Activated CD4-positive, alpha-beta T cell treated with anti-CD3 and anti-CD28 coated beads, Interleukin-2, amount 10 ng/mL, durations not matched to agents 7 days and 5 days (primary cell): ENCODE measurements at regions of chr14 and their contacts with region 1.

Region 1: GRCh38 chr14:75514673-75515628 is 7.3 kb upstream of the BATF start:
- DNase-seq: peak; percentile 41
- H3K4me3 Mint-ChIP-seq: peak overlapping the region; percentile 70
- H3K27ac Mint-ChIP-seq: peak overlapping the region; percentile 91
- H3K4me1 Mint-ChIP-seq: peaks cover 27% of the 10 kb centered on the region
- H3K27me3 Mint-ChIP-seq: no peaks in the 10 kb centered on the region

Region 2: DNA sequence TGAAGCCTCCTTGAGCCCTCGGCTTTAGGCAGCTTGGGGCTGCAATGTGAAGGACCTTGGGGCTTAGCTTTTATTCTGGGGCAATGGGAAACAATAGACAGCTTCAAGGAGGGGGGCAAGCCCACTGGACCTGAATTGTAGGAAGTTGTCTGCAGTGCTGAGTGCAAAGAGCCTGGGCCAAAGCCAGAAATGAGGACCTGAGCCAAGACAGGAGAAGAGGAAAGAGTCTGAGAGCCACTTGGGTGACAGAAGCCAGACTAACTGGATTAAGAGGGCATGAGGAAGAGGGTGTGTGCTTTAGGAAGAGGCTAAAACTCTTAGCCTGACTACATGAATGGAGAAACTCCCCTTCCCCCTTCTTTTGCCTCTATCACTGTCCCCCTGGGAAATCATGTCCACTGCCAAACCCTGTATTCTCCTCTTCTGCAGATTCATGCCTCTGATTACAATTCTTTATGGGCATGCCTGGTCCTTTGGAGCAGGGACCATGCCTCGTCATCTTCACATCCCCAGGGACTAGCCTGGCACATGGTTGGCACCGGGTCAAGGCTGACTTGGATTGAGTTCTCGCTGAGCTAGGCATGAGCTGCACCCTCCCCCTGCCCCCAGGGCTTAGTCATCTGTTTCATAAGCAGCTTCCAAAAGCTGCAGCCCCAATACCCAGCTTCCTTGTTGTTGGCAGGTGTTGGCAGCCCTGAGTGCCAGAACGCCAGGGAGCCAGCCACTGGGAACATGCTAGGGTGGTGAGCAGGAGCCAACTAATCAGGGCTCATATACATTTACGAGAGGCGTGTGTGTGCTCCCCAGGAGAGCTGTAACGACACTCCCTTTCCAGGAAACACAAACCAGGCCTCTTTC is 114.9 kb before region 1 on chr14:
- CTCF ChIA-PET with region 1: no interaction called
- POLR2A ChIA-PET with region 1: no interaction called
- DNase-seq: no peak
- H3K4me3 Mint-ChIP-seq: no peak overlapping the region
- H3K27ac Mint-ChIP-seq: peak overlapping the region; percentile 73
- H3K4me1 Mint-ChIP-seq: peaks cover 22% of the 10 kb centered on the region
- H3K27me3 Mint-ChIP-seq: peaks cover 13% of the 10 kb centered on the region

Region 3: DNA sequence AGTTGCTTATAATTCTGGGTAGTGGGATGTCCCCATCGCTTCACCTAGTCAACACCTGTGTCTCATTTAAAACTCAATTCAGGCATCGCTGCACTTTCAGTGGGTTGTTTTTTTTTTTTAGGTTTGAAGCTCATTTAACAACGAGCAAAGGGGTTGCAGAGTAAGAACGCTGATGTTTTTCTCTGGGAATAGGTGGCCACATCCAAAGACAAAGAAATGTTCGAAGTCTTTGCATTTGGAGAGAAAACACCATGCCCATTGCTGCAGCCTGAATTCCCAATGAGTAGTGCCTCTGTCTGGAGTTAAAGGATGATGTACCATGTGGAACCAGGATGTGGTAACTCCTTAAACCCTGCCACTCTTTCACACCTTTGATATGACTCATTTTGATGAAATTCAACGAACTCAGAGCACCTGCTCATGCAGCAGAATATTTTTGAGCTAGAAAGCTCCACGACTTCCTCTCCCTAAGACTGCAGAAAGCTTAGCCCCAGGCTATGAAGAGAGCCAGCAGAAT is 27.7 kb before region 1 on chr14:
- CTCF ChIA-PET with region 1: interaction called, 11 read pairs
- POLR2A ChIA-PET with region 1: no interaction called
- DNase-seq: peak; percentile 31
- H3K4me3 Mint-ChIP-seq: no peak overlapping the region
- H3K27ac Mint-ChIP-seq: peak overlapping the region; percentile 34
- H3K4me1 Mint-ChIP-seq: peaks cover 35% of the 10 kb centered on the region
- H3K27me3 Mint-ChIP-seq: no peaks in the 10 kb centered on the region

Region 4: GRCh38 chr14:75497191-75497590 is 17.8 kb before region 1 on chr14:
- CTCF ChIA-PET with region 1: interaction called, 12 read pairs
- POLR2A ChIA-PET with region 1: no interaction called
- DNase-seq: no peak
- H3K4me3 Mint-ChIP-seq: no peak overlapping the region
- H3K27ac Mint-ChIP-seq: peak overlapping the region; percentile 76
- H3K4me1 Mint-ChIP-seq: peaks cover 44% of the 10 kb centered on the region
- H3K27me3 Mint-ChIP-seq: no peaks in the 10 kb centered on the region

Region 5: DNA sequence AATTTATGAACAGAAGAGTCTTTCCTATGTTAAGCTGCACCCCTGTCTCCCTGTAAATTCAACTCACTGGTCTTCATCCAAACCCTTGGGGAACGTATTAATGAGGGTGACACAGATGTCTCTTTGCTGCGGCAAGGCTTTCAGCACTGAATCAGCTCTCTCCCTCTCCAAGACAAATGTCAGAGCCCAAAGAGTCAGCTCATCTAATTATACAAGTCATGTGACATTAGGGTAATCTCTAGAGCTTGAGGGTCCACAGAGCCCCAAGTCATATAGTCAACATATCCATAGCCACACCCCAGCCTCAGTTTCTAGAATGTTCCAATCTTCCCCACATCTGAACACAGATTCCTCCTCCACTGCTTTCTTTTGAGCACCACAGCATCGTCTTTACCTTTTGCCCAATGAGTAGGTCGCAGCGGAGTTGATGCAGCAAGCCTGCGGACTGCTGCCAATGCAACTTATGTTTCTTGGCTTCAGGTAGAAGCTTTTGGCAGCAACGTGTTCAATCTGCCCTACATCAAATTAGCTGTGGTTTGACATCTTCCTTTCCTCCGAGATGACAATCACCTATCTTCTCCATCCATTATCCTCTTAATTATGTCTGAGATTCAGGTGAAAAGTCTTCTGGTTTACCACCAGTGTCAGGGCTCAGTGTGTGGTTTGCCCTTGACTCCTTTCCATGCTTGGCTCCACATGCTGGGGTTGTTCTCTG is 12.7 kb after region 1 on chr14:
- CTCF ChIA-PET with region 1: interaction called, 14 read pairs
- POLR2A ChIA-PET with region 1: no interaction called
- DNase-seq: no peak
- H3K4me3 Mint-ChIP-seq: peak overlapping the region; percentile 28
- H3K27ac Mint-ChIP-seq: peak overlapping the region; percentile 21
- H3K4me1 Mint-ChIP-seq: peaks cover 80% of the 10 kb centered on the region
- H3K27me3 Mint-ChIP-seq: no peaks in the 10 kb centered on the region

Region 6: GRCh38 chr14:75591331-75591946 is 76.5 kb after region 1 on chr14:
- CTCF ChIA-PET with region 1: no interaction called
- POLR2A ChIA-PET with region 1: no interaction called
- DNase-seq: no peak
- H3K4me3 Mint-ChIP-seq: no peak overlapping the region
- H3K27ac Mint-ChIP-seq: no peak overlapping the region
- H3K4me1 Mint-ChIP-seq: no peaks in the 10 kb centered on the region
- H3K27me3 Mint-ChIP-seq: no peaks in the 10 kb centered on the region

Region 7: GRCh38 chr14:75628816-75629215 is 113.9 kb after region 1 on chr14:
- CTCF ChIA-PET with region 1: no interaction called
- POLR2A ChIA-PET with region 1: no interaction called
- DNase-seq: no peak
- H3K4me3 Mint-ChIP-seq: no peak overlapping the region
- H3K27ac Mint-ChIP-seq: no peak overlapping the region
- H3K4me1 Mint-ChIP-seq: no peaks in the 10 kb centered on the region
- H3K27me3 Mint-ChIP-seq: no peaks in the 10 kb centered on the region

Region 8: GRCh38 chr14:75794615-75795038 is 279.7 kb after region 1 on chr14:
- CTCF ChIA-PET with region 1: no interaction called
- POLR2A ChIA-PET with region 1: no interaction called
- DNase-seq: no peak
- H3K4me3 Mint-ChIP-seq: no peak overlapping the region
- H3K27ac Mint-ChIP-seq: no peak overlapping the region
- H3K4me1 Mint-ChIP-seq: no peaks in the 10 kb centered on the region
- H3K27me3 Mint-ChIP-seq: no peaks in the 10 kb centered on the region